Ascending aorta (tissue), 2 donors: ENCODE measurements at regions of chrX and their contacts with region 1.

Region 1: GRCh38 chrX:153687121-153688039 is at the start of gene SLC6A8:
- DNase-seq: peak in 1 of 2 donors; percentile 76
- H3K4me3 ChIP-seq: peak within 1 kb of the TSS; percentile 53 to 69
- H3K27ac ChIP-seq: peak within 1 kb of the TSS; percentile 49 to 54
- H3K4me1 ChIP-seq: no peaks in the 10 kb centered on the region
- H3K27me3 ChIP-seq: no peaks in the 10 kb centered on the region
- CTCF ChIP-seq: peak in 2 of 3 experiments; percentile 17 to 38
- total RNA-seq, gene SLC6A8: 44.2 TPM

Region 2: GRCh38 chrX:153599192-153600031 is 88.0 kb before region 1 on chrX:
- intact Hi-C with region 1: loop called (anchors 5 kb)
- DNase-seq: peak; percentile 50 to 91
- H3K4me3 ChIP-seq: peak overlapping the region; percentile 53 to 86
- H3K27ac ChIP-seq: peak overlapping the region; percentile 41 to 47
- H3K4me1 ChIP-seq: no peaks in the 10 kb centered on the region
- H3K27me3 ChIP-seq: no peaks in the 10 kb centered on the region
- CTCF ChIP-seq: no peak

Region 3: DNA sequence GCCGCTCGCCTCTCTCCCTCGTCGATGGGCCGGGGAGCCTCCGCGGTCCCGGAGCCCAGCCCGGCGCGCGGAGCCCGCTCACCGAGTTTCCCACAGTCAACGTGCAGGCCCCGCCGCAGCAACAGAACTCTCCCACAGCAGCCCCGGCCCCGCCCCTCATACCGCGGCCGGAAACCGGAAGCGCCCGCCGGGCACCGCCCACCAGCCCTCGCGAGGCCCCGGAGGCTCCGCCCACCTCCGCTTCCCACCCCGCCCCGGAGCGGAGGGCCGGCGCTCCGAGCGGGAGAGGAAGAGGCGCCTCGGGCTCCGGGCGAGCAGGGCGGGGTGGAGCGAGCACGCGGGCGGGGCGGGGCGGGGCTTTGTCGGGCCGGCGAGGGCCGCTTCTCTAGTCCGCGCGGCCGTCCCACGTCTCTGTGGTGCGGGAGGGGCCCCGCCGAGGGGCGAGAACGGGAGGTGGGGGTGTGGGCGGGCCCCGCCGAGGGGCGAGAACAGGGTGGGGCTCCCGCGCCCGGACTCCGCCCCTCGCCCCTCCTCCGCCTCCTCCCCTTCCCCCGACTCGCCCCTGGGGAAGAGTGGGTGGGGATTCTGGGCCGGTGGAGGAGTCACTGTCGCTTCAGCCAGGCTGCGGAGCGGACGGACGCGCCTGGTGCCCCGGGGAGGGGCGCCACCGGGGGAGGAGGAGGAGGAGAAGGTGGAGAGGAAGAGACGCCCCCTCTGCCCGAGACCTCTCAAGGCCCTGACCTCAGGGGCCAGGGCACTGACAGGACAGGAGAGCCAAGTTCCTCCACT is 37.1 kb after region 1 on chrX and contains the starts of genes ABCD1 and BCAP31:
- intact Hi-C with region 1: loop called (anchors 5 kb)
- DNase-seq: peak; percentile 51 to 92
- H3K4me3 ChIP-seq: peak within 1 kb of the TSS; percentile 62 to 69
- H3K27ac ChIP-seq: peak within 1 kb of the TSS; percentile 88 to 89
- H3K4me1 ChIP-seq: peaks cover 8 to 26% of the 10 kb centered on the region in 2 donors
- H3K27me3 ChIP-seq: no peaks in the 10 kb centered on the region
- CTCF ChIP-seq: no peak
- total RNA-seq, gene ABCD1: 14.7 TPM
- total RNA-seq, gene BCAP31: 63.0 TPM

Region 4: DNA sequence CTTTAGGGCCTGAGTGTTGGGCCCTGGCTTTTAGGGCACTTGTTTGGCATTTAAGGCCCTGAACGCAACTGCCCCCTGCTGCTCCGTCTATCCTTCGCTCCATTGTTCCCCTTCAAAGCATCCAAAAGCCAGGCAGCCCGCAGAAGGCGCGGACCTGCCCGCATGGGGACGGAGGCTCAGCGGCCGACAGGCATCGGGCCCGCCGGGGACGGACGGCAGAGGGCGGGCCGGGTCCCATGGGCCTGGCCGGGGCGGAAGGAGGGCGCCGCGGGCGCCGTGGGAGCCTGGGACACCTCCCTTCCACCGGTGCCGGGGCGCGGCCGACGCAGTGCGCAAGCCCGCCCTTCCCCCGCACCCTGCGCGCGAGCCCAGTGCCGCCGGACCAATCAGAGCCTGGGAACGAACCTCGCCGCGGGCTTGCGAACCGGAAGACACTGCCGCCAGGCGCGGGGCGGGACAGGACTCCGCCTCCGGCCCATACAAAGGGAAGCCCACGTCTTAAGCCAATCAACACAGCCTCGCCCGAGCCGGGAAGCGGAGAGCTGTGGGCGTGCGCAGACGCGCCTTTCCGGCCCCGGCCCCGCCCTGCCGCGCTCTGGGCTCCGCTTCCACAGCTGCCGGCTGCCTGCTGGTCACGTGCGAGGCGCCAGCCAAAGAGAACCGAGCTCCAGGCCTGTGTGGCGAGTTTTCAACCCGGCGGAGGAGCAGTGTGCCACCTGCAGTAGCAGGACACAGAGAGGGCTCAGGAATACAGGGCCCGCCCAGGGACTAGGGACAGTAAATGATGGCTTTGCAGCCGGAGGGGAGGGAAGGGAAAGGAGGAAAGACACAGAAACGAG is 240.8 kb after region 1 on chrX:
- intact Hi-C with region 1: no loop called
- DNase-seq: peak; percentile 91 to 98
- H3K4me3 ChIP-seq: peak overlapping the region; percentile 66 to 76
- H3K27ac ChIP-seq: peak overlapping the region; percentile 92 to 97
- H3K4me1 ChIP-seq: peaks cover 6 to 9% of the 10 kb centered on the region in 2 donors
- H3K27me3 ChIP-seq: no peaks in the 10 kb centered on the region
- CTCF ChIP-seq: peak in 1 of 3 experiments; percentile 25